ENCODE measurements at regions of chr2 and their contacts with region 1.

Region 1: DNA sequence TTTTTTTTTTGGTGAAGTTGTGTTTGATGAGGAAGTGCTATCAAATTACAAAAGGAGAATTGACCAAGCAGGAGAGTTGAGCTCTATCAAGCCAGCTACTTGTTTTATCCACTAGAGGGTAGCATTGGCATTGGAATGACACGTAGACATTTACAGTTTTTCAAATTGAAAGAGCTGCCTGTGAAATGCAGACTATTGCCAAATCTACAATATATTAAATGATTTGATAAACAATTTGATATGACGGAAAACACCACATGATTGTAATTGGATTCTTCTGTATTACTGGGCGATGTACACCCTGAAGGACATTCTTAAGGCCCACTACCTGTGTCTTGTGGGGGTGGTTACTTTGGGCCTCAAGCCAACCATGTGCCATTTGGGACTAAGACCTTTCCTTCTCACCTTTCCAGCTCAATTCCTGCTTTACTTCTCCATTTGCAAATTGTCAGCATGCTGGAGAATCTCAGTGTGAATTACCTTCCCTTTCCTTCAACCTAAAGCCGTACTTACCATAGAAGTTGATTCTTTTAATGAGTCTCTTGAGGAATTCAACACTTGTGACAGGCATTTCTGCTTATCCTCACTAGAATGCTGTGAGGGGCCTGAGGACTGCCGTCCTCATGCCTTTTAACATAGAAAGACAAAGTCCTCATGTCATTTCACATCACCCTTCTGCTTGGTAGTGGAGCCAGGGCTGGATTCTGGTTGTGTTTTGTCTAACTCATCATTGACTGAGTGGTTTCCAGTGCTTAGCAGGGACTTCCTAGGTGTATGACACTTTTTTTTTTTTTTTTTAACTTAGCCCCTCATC is 134.8 kb upstream of the THUMPD2 start:
- DNase-seq: no peak
- H3K4me3 ChIP-seq: no peak overlapping the region
- H3K27ac ChIP-seq: no peak overlapping the region
- H3K4me1 ChIP-seq: peaks cover 5 to 6% (median 6%) of the 10 kb centered on the region in 4 donors
- H3K27me3 ChIP-seq: no peaks in the 10 kb centered on the region
- CTCF ChIP-seq: peak; percentile 72 to 77 (median 74)
- EP300 ChIP-seq: no peak
- POLR2A ChIP-seq: no peak

Region 2: DNA sequence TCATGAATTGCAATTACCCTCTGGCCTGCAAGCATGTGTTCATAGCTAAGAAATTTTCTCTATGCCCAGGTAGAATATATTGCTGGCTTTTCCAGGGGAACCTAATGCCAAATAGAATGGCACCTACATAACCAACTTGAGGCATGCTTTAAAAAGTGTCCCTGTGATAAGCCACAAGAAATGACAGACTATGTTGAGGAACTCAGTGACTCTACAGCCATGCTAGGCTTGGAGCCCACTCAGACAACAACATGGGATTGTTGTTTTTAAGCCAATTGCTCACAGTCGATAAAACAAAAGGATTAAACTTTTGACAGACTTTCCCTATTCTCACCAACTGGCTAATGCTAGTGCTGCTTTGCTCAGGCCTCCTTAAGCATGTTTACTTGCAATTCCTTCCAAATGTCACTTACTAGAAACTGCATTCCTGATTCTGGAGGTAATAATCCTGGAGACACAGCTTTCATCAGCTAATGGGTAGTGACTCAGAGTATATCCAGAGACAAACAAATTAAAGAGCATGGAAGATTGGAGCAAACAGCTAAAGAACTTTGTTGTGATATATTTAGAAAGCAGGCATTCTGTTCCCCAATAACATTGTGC is 289.0 kb after region 1 on chr2:
- intact Hi-C with region 1: loop called (anchors 5 kb)
- DNase-seq: no peak
- H3K4me3 ChIP-seq: no peak overlapping the region
- H3K27ac ChIP-seq: peak overlapping the region; percentile 35 to 48 (median 40)
- H3K4me1 ChIP-seq: peaks cover 15 to 44% (median 36%) of the 10 kb centered on the region in 4 donors
- H3K27me3 ChIP-seq: no peaks in the 10 kb centered on the region
- CTCF ChIP-seq: no peak
- EP300 ChIP-seq: no peak
- POLR2A ChIP-seq: no peak

Region 3: GRCh38 chr2:40431600-40431955 is 517.7 kb after region 1 on chr2:
- intact Hi-C with region 1: no loop called
- DNase-seq: no peak
- H3K4me3 ChIP-seq: no peak overlapping the region
- H3K27ac ChIP-seq: peak overlapping the region in 3 of 4 donors; percentile 7 to 43 (median 30)
- H3K4me1 ChIP-seq: peaks cover 46 to 69% (median 55%) of the 10 kb centered on the region in 4 donors
- H3K27me3 ChIP-seq: no peaks in the 10 kb centered on the region
- CTCF ChIP-seq: no peak
- EP300 ChIP-seq: no peak
- POLR2A ChIP-seq: no peak

Region 4: GRCh38 chr2:40554668-40555285 is 640.9 kb after region 1 on chr2:
- intact Hi-C with region 1: loop called (anchors 2 kb)
- DNase-seq: no peak
- H3K4me3 ChIP-seq: no peak overlapping the region
- H3K27ac ChIP-seq: no peak overlapping the region
- H3K4me1 ChIP-seq: no peaks in the 10 kb centered on the region
- H3K27me3 ChIP-seq: no peaks in the 10 kb centered on the region
- CTCF ChIP-seq: peak; percentile 89 to 93 (median 92)
- EP300 ChIP-seq: no peak
- POLR2A ChIP-seq: no peak

Region 5: DNA sequence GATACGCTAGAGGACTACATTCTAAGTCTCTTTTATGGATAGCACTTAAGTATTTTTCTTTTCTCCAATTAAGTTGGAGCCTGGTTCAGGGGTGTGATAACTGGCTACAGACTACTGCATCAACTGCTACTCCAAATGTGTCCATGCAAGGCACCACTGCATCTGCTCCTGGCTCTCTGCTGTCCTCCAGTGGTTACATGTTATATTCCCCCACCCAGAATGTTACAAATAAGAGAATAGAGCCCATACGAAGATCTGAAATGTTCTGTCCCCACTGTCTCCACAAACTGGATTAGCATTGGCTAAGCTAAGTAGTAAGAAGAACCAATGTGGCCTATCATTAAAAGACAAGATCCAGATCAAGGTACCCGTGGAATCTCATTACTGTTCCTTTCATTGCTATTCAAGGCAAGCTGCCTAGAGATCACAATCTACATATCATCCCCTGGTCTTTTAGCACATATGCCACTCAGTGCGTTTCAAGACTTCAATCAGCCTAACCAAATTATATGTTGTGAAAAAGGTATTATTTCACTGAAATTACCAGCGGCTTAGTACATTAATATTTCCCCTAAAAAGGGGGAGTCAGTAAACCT is 846.3 kb after region 1 on chr2:
- intact Hi-C with region 1: loop called (anchors 5 kb)
- DNase-seq: no peak
- H3K4me3 ChIP-seq: no peak overlapping the region
- H3K27ac ChIP-seq: no peak overlapping the region
- H3K4me1 ChIP-seq: peaks cover 5 to 13% (median 12%) of the 10 kb centered on the region in 4 donors
- H3K27me3 ChIP-seq: no peaks in the 10 kb centered on the region
- CTCF ChIP-seq: peak; percentile 64 to 84 (median 72)
- EP300 ChIP-seq: no peak
- POLR2A ChIP-seq: no peak

Region 6: DNA sequence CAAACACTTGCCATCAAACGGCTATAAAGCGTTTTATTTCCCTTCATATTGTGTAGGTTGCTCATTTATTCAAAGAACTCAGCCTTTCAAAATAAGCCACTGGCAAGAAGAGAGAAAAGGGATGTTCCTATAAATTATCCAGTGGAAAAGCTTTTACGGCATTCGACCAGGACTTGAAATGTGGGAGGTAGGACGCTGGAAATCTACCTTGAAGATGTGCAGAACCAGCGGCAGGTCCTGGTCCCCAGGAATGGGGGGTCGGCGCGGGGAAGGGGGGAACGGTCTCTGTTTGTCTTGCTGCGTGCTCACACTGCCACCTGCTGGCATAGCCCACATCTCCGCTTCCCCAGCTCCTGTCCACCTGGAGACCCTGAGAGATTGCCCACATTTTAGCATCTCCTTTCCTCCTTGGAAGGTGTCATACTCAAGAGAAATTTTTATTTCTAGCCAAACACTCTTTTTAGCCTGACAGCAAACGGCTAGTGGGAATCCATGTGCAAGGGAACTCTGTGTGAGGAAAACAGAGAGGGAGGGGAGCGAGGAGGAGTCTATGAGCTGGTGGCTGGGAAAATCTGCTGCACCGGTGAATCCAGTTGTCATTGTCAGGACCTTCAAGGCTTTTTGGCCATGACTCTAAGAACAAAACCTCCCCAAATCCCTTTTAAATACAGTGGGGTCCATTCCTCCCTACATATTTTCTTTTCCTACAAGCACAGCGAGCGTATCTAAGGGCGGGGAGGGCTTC is 1785.0 kb after region 1 on chr2:
- intact Hi-C with region 1: loop called (anchors 5 kb)
- DNase-seq: no peak
- H3K4me3 ChIP-seq: peak overlapping the region; percentile 5 to 41 (median 26)
- H3K27ac ChIP-seq: no peak overlapping the region
- H3K4me1 ChIP-seq: peaks cover 5 to 20% (median 19%) of the 10 kb centered on the region in 4 donors
- H3K27me3 ChIP-seq: no peaks in the 10 kb centered on the region
- CTCF ChIP-seq: peak; percentile 69 to 85 (median 82)
- EP300 ChIP-seq: no peak
- POLR2A ChIP-seq: no peak